Right ventricle myocardium superior (tissue), 1 donor: ENCODE measurements at regions of chr17 and their contacts with region 1.

Region 1: DNA sequence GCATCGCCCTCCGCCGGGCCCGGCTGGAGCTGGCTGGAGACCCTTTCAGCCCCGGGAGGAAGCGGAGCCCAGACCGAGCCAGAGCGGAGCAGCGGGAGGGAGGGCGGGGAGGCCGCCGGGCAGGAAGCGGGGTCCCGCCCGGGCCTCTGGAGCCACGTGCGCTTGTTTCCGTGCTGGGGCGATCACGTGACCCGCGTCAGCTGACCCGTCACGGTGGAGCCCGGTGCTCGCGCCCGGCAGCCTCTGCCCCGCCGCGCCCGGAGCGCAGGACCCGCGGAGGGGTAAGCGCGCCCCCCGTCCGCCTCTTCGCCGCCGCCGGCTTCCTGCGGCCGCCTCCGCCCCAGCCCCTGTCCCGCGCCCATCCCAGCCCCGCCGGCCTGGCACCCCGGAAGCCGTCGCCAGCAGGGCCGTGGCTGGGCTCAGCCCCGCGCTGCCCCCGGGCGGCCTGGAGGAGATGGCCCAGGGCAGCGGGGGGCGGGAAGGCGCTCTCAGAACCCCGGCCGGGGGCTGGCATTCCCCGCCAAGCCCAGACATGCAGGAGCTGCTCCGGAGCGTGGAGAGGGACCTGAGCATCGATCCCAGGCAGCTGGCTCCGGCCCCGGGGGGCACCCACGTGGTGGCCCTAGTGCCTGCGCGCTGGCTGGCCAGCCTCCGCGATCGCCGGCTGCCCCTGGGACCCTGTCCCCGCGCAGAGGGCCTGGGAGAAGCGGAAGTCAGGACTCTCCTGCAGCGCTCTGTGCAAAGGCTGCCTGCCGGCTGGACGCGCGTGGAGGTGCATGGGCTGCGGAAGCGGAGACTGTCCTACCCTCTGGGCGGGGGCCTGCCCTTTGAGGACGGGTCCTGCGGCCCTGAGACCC is at the start of gene WDR81:
- DNase-seq: peak; percentile 97
- ATAC-seq: peak; percentile 88
- total RNA-seq, gene WDR81: 8.5 TPM

Region 2: GRCh38 chr17:385926-386876 is 1338.5 kb before region 1 on chr17:
- intact Hi-C with region 1: no loop called
- DNase-seq: peak; percentile 90
- ATAC-seq: peak; percentile 89

Region 3: DNA sequence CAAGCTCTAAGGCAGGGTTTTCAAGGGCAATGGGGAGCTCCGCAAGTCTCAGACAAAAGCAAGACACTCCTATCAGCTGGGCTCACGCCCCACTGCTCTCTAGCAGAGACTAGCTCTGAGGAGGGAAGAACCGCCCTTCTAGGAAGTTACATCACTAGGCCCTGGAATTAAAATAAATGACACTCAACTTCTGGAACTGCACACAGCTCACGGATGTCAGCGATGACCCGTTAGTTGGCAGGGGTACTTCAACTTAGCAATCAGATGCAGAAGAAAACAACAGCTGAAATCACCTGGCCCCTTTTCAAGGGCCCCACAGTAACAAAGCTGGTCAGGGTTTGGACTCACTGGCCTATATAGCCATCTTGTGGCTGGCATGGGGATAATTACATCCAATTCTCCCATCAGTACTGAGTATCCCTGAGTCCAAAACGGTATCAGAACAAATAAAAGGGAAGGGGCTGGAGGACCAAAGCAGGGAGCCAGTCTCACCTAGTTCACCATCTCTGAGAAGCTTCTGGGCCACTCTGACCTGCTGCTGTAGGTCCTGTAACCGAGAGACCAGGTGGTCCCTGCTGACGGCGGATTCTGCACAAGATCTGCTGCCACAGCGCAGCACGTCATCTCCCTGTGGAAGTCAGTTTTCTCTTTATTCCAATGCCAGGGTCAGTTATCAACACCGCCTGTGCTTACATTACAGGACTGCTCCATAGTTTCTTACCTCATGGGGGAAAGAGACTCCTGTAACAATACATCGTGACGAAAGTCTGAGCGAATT is 59.3 kb after region 1 on chr17:
- intact Hi-C with region 1: loop called (anchors 5 kb)
- DNase-seq: peak; percentile 86
- ATAC-seq: peak; percentile 69

Region 4: GRCh38 chr17:1865252-1866037 is 140.7 kb after region 1 on chr17:
- intact Hi-C with region 1: loop called (anchors 10 kb)
- DNase-seq: no peak
- ATAC-seq: peak; percentile 49